ENCODE measurements at regions of chr2 and their contacts with region 1.

Region 1: DNA sequence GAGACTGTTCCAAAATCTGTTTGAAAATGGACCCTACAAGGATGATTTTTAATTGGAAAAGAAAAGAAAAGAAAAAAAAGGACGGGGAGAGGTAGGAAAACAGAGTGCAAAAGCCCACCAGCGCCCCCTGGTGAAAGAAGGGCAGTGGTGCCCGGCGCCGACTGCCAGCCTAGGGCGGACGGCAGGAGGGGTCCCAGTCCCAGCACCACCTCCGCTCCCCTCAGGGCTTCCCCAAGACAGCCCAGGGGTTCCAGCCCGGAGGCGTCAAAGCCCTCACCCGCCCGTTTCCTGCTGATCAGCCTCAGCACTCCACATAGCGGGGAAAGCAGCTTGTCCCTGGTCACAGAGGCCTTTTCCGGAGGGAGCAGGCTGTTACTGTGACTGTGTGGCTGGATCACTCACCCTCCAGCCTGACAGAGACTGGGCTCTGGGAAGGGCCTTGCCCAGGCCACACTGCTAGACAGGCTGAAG is 213.9 kb downstream of the TFCP2L1 start:
- DNase-seq: peak; percentile 55 to 95
- H3K4me3 ChIP-seq: no peak overlapping the region
- CTCF ChIP-seq: peak in 1 of 3 donors; percentile 69
- POLR2A ChIP-seq: no peak

Region 2: GRCh38 chr2:120697471-120697870 is 373.6 kb before region 1 on chr2:
- intact Hi-C with region 1: loop called (anchors 2 kb)
- DNase-seq: no peak
- H3K4me3 ChIP-seq: no peak overlapping the region
- CTCF ChIP-seq: no peak
- POLR2A ChIP-seq: no peak

Region 3: DNA sequence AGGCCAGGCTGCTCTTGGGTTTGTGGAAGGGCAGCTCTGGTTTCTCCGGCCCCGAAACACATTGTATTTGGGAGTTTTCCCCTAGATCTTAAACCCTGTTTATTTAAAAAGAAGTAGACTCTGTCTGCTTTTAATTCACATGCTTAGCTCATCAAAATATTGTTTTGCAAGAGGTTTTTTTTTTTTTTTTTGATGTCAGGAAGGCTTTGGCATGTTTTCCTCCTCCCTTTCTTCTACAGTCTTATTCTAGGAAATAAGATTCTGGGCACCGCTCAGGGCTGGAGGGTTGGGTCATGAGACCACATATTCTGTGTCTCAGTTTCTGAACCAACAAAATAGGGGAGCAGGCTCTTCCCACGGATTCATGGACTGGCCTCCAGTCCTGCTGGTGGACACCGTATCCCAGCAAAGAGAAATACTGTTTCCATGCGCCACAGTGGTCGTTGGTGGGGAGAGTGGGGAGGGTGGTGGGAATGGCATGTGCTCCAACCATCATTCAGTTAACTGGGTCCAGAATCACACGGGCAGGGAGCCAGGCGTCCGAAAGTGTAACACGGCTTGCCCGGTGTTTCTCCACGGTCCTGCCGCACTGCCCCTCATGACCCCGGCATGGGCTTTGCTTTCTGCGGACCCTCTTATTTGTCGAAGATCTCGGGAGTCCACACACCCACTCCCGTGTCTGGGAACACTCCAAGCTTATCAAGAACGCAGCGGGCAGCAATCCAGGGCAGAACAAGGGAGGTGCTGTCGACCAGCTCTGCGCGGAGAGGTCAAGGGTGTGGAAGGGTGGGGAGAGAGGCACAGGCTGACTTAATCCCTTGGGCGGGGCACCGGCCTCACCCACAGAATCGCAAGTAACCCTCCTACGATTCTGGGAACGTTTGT is 158.7 kb before region 1 on chr2:
- intact Hi-C with region 1: no loop called
- DNase-seq: peak in 1 of 2 donors; percentile 39
- H3K4me3 ChIP-seq: no peak overlapping the region
- CTCF ChIP-seq: no peak
- POLR2A ChIP-seq: no peak

Region 4: GRCh38 chr2:122500316-122501105 is 1429.4 kb after region 1 on chr2:
- intact Hi-C with region 1: no loop called
- DNase-seq: no peak
- H3K4me3 ChIP-seq: no peak overlapping the region
- CTCF ChIP-seq: no peak
- POLR2A ChIP-seq: no peak